ENCODE measurements at regions of chr2 and their contacts with region 1.

Region 1: DNA sequence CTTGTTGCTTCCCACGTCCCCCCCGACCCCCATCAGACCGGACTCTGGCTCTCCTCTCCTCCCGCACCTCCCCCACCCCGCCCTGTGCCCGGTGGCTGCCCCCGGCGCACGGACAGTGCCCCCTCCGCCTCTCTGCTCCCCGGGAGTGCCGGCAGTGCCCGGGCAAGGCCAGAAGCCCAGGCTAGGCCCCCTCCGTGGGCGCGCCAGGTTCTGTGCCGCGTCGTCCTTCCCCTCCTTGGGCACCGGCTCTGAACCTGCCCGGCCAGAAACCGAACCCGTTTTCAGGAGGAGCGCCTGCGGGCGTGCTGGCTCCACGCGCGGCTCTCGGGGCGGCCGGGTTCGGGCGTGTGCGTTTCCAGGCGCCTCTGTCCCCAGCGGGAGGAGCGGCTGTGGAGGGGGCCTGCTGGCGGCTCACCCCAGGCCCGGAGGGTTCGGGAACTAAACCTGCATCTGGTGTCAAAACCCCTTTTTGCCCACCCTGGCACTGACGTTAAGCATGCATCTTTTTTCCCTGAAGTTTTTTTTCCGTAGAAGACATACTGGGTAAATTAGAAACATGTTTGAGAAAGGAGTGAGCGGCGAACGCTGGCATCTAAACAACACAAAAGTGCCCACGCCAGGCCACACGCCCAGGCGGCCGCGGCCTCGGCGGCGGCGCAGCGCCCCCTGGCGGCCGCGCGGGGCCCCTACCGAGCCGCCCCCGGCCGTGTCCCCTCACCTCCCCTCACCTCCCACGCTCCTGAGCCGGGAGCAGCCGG is 123.9 kb upstream of the SLC1A4 start:
- DNase-seq: peak; percentile 54
- ATAC-seq: peak; percentile 77
- H3K4me3 ChIP-seq: peak overlapping the region; percentile 58
- H3K27ac ChIP-seq: peak overlapping the region; percentile 3; the same call in 1 of the 2 replicates
- H3K4me1 ChIP-seq: peaks cover 13% of the 10 kb centered on the region
- H3K27me3 ChIP-seq: peaks cover 43% of the 10 kb centered on the region
- CTCF ChIP-seq: peak; percentile 83
- POLR2A ChIP-seq: no peak
- RAD21 ChIP-seq: peak; percentile 90

Region 2: DNA sequence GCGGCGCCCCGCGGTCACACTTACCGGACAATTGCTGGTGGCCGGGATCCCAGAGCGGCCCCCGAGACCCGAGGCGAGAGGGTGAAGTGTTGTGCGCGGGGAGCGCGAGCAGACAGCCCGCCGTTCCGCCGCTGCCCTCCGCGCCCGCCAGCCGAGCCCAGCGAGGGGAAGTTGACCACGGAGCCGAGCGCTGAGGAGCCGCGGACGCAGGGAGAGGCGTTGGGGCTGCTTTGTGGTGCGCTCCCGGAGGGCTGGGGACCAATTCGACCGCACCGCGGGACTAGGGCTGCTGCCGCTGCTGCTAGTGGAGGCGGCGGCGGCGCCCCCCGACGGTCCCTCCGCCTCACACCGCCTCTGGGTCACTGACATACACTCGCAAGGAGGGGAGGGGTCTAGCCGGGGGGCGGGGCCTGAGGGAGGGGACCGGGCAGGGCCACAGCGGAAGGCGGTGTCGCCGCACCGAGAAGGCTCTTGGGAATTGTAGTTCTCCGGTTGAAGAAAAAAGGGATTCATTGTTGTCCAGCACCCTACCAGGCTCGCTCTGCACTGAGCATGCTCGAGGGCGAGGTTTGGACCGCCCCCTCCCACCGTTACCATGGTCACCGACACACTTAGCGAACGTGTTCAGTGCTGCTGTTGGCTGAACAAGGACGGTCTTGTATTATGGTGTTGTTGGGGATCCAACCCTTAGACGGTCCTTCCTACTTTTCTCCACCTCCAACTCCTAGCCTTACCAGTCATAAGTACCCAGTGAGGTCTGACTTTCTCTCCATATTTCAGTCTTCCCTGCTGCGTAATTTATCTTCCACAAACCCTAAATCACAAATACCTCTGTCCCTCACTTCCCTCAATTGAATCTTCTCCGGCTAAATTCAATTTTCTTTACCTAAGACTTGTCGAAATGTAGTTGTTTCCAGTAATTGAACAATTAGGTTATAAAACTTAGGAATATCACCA is 720.9 kb before region 1 on chr2 and contains the start of gene PELI1:
- CTCF ChIA-PET with region 1: no interaction called
- POLR2A ChIA-PET with region 1: no interaction called
- dilution Hi-C with region 1: no loop called
- in situ Hi-C with region 1: no loop called
- intact Hi-C with region 1: loop called (anchors 10 kb)
- DNase-seq: peak; percentile 95
- ATAC-seq: peak; percentile 98
- H3K4me3 ChIP-seq: peak within 1 kb of the TSS; percentile 90
- H3K27ac ChIP-seq: peak within 1 kb of the TSS; percentile 52
- H3K4me1 ChIP-seq: no peaks in the 10 kb centered on the region
- H3K27me3 ChIP-seq: peaks cover 2% of the 10 kb centered on the region
- CTCF ChIP-seq: peak; percentile 20; the same call in 1 of the 2 replicates
- POLR2A ChIP-seq: peak; percentile 80
- RAD21 ChIP-seq: peak; percentile 12; the same call in 1 of the 2 replicates
- total RNA-seq, gene PELI1: 2.5 and 4.2 TPM in 2 replicates

Region 3: GRCh38 chr2:64586883-64587481 is 278.3 kb before region 1 on chr2:
- CTCF ChIA-PET with region 1: interaction called, 9 read pairs
- POLR2A ChIA-PET with region 1: no interaction called
- dilution Hi-C with region 1: no loop called
- in situ Hi-C with region 1: no loop called
- intact Hi-C with region 1: loop called (anchors 1 kb)
- DNase-seq: peak; percentile 72
- ATAC-seq: peak; percentile 80
- H3K4me3 ChIP-seq: no peak overlapping the region
- H3K27ac ChIP-seq: no peak overlapping the region
- H3K4me1 ChIP-seq: no peaks in the 10 kb centered on the region
- H3K27me3 ChIP-seq: no peaks in the 10 kb centered on the region
- CTCF ChIP-seq: peak; percentile 77
- POLR2A ChIP-seq: no peak
- RAD21 ChIP-seq: peak; percentile 87

Region 4: GRCh38 chr2:64653349-64654062 is 211.7 kb before region 1 on chr2 and contains the start of gene SERTAD2:
- CTCF ChIA-PET with region 1: interaction called, 4 read pairs
- POLR2A ChIA-PET with region 1: interaction called, 7 read pairs
- dilution Hi-C with region 1: no loop called
- in situ Hi-C with region 1: no loop called
- intact Hi-C with region 1: loop called (anchors 1 kb)
- DNase-seq: peak; percentile 84
- ATAC-seq: peak; percentile 91
- H3K4me3 ChIP-seq: peak within 1 kb of the TSS; percentile 98
- H3K27ac ChIP-seq: peak within 1 kb of the TSS; percentile 98
- H3K4me1 ChIP-seq: peaks cover 5% of the 10 kb centered on the region
- H3K27me3 ChIP-seq: no peaks in the 10 kb centered on the region
- CTCF ChIP-seq: peak; percentile 16; the same call in 1 of the 2 replicates
- POLR2A ChIP-seq: no peak
- RAD21 ChIP-seq: peak; percentile 24; the same call in 1 of the 2 replicates
- total RNA-seq, gene SERTAD2: 5.0 and 6.7 TPM in 2 replicates

Measured in IMR-90 (cell line).